Activated CD8-positive, alpha-beta T cell treated with anti-CD3 and anti-CD28 coated beads, Interleukin-2, amount 10 ng/mL, durations not matched to agents 7 days and 5 days (primary cell): ENCODE measurements at regions of chr7 and their contacts with region 1.

Region 1: GRCh38 chr7:95396136-95397032 is at the start of gene PON3:
- DNase-seq: peak; percentile 38
- ATAC-seq: peak; percentile 98
- H3K4me3 Mint-ChIP-seq: peak within 1 kb of the TSS; percentile 57
- H3K27ac Mint-ChIP-seq: no peak within 1 kb of the TSS
- H3K4me1 Mint-ChIP-seq: peaks cover 6% of the 10 kb centered on the region
- H3K27me3 Mint-ChIP-seq: peaks cover 32% of the 10 kb centered on the region
- total RNA-seq, gene PON3: not detected

Region 2: DNA sequence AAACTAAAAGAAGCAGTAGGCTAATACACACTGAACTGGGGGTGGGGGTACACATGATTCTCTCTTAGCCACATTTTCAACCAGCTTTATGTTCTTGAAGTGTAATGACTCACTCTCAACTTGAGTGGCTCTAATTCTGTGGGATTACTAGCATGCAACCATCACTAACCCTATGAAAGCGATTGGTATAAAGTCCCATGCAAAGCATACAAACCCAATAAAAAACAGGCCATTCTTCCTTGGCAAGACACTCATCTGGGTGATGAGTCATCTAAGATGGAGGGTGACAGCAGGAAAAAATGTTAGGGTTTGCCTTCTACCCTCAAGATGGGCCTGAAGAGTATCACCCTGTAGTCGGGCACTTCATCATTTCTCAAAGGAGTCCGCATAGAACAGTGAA is 14.7 kb after region 1 on chr7:
- CTCF ChIA-PET with region 1: interaction called, 17 read pairs
- POLR2A ChIA-PET with region 1: no interaction called
- DNase-seq: no peak
- ATAC-seq: no peak
- H3K4me3 Mint-ChIP-seq: no peak overlapping the region
- H3K27ac Mint-ChIP-seq: no peak overlapping the region
- H3K4me1 Mint-ChIP-seq: no peaks in the 10 kb centered on the region
- H3K27me3 Mint-ChIP-seq: no peaks in the 10 kb centered on the region